Mammary epithelial cell (primary cell): ENCODE measurements at regions of chr2 and their contacts with region 1.

Region 1: DNA sequence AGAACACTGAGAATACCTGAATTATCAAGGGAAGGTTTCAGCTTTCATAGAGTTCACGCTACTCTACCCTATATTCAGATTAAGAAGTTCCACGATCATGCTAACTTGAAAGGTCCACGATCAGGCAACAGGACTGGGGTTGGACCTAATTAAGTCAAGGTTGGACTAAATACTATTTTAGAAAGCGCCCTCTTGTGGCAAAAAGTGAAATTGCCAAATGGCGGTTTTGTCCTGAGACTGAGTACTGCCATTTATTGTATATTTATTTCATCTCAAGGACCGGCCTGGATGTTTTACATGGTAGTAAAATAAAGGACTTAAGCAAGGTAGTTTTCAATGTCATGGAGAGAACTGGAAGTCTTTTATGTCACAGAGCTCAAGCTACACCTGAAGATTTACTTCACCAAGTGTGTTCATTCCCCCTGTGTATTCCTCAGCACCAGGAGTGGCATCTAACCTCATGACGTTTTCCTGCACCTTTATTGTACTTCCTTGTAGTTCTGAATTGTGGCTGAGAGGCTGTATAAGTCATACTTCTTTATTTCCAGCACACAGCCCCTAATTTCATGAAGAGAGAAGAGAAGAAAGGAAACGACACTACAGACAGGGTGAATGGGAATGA is 56.8 kb downstream of the SRD5A2 start:
- DNase-seq: peak; percentile 46
- H3K4me3 ChIP-seq: no peak overlapping the region
- H3K27ac ChIP-seq: no peak overlapping the region
- H3K4me1 ChIP-seq: no peaks in the 10 kb centered on the region
- H3K27me3 ChIP-seq: no peaks in the 10 kb centered on the region
- CTCF ChIP-seq: peak; percentile 76 to 77

Region 2: GRCh38 chr2:31413862-31414550 is 110.0 kb before region 1 on chr2:
- CTCF ChIA-PET with region 1: no interaction called
- dilution Hi-C with region 1: no loop called
- in situ Hi-C with region 1: no loop called
- intact Hi-C with region 1: loop called (anchors 1 kb)
- DNase-seq: no peak
- H3K4me3 ChIP-seq: peak overlapping the region; percentile 32 to 53 (median 38)
- H3K27ac ChIP-seq: peak overlapping the region; percentile 49
- H3K4me1 ChIP-seq: peaks cover 37% of the 10 kb centered on the region
- H3K27me3 ChIP-seq: no peaks in the 10 kb centered on the region
- CTCF ChIP-seq: peak in 1 of 2 donors; percentile 45

Region 3: DNA sequence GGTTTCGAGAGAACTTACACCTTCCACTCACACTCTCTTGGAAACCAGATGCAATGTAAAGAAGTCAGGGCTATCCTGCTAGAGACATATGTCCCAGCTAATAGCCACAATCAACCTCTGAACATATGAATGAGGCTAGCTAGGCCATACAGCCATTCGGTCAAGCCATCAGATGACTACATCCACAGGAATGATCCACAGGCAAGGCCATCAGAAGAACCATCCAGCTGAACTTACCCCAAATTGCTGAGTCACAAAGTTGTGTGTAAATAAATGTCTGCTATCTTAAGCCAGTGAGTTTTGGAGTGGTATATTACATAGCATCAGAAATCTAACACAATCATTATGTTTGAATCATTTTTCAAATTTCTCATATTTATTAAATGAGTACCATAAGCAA is 534.1 kb after region 1 on chr2:
- CTCF ChIA-PET with region 1: no interaction called
- dilution Hi-C with region 1: no loop called
- in situ Hi-C with region 1: no loop called
- intact Hi-C with region 1: no loop called
- DNase-seq: peak; percentile 6
- H3K4me3 ChIP-seq: no peak overlapping the region
- H3K27ac ChIP-seq: no peak overlapping the region
- H3K4me1 ChIP-seq: peaks cover 7% of the 10 kb centered on the region
- H3K27me3 ChIP-seq: no peaks in the 10 kb centered on the region
- CTCF ChIP-seq: no peak